ENCODE measurements at regions of chr7 and their contacts with region 1.

Region 1: DNA sequence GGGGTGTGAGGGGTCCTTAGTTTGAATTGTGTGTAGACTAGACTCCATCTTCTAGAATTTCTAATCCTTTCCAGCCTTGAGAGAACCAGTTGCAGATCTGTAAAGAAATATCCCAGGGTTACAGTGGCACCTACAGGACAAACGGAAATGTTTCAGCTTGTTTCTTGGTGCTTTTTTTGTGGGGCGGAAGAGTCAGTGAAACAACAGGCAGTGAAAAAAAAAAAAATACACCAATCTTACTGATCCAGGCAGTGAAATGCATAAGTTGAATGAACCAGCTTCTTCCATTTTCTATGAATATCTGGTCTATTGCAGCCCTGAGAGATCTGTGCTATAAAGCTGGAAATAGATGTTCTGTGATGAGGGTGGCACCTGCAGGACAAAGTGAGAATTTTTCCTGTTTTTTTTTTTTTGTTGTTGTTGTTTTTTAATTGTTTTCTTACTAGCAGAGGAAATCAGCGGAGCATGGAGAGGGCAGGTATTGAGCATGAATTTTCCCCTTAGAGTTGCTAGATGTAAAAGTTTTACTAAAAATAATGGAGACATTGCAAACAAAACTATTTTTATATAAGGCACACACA is 81.9 kb upstream of the DYNC1I1 start:
- DNase-seq: no peak
- H3K4me3 ChIP-seq: no peak overlapping the region
- CTCF ChIP-seq: peak; percentile 12

Region 2: GRCh38 chr7:95545078-95545498 is 145.4 kb before region 1 on chr7:
- CTCF ChIA-PET with region 1: interaction called, 189 read pairs
- POLR2A ChIA-PET with region 1: no interaction called
- DNase-seq: no peak
- H3K4me3 ChIP-seq: peak overlapping the region; percentile 24; the same call in 1 of the 2 replicates
- CTCF ChIP-seq: peak; percentile 61

Region 3: DNA sequence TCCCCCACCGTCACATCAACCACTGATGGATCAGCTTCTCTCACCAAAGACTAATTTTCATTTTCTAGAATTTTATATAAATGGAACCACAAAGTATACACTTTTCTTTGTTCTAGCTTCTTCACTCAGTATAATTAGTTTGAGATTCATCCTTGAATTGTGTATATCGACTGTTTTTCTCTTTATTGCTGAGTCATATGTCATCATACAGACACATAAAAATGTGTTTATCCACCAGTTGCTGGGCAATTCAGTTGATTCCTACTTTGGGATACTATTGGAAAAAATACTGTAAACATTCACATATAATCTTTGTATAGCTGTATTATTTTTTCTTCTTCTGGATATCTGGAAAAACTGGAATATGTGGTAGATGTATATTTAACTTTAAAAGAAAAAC is 120.7 kb before region 1 on chr7:
- CTCF ChIA-PET with region 1: no interaction called
- POLR2A ChIA-PET with region 1: no interaction called
- DNase-seq: no peak
- H3K4me3 ChIP-seq: no peak overlapping the region
- CTCF ChIP-seq: no peak

Region 4: GRCh38 chr7:95662987-95663386 is 27.5 kb before region 1 on chr7:
- CTCF ChIA-PET with region 1: interaction called, 12 read pairs
- POLR2A ChIA-PET with region 1: no interaction called
- DNase-seq: no peak
- H3K4me3 ChIP-seq: no peak overlapping the region
- CTCF ChIP-seq: no peak

Measured in AG04449 (cell line).